CD8-positive, alpha-beta T cell (primary cell): ENCODE measurements at regions of chrX and their contacts with region 1.

Region 1: DNA sequence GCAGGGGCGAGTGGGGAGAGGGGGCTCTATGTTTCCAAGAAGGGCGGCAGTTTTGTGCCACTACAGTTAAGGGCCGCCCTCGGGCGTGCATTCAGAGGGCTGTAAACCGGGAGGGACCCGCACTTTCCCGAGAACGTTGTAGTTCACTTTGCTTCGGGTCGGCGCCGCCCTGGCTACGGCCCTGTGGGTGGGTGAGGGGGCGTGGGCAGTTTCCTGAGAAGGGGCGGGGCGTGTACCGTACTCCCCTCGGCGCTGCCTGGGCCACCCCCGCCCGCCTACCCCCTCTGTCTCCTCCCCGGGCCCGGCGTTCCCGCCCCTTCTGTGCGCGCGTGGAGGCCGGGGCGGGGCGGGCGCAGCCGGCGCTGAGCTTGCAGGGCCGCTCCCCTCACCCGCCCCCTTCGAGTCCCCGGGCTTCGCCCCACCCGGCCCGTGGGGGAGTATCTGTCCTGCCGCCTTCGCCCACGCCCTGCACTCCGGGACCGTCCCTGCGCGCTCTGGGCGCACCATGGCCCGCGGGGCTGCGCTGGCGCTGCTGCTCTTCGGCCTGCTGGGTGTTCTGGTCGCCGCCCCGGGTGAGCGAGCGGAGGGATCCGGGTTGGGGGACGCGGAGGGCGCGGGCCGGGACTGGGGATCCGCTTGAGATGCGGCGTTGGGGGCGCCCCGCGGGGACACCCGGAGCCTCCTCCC is at the start of gene CD99:
- DNase-seq: peak; percentile 83 to 96 (median 89)
- ATAC-seq: peak; percentile 93
- H3K4me3 ChIP-seq: peak within 1 kb of the TSS; percentile 80 to 91
- H3K4me3 Mint-ChIP-seq: peak within 1 kb of the TSS; percentile 94
- H3K27ac ChIP-seq: peak within 1 kb of the TSS; percentile 70 to 71
- H3K27ac Mint-ChIP-seq: peak within 1 kb of the TSS; percentile 94
- H3K4me1 ChIP-seq: peaks cover 44% of the 10 kb centered on the region
- H3K4me1 Mint-ChIP-seq: peaks cover 37% of the 10 kb centered on the region
- H3K27me3 ChIP-seq: no peaks in the 10 kb centered on the region
- H3K27me3 Mint-ChIP-seq: no peaks in the 10 kb centered on the region
- CTCF ChIP-seq: no peak
- total RNA-seq, gene CD99: 114 to 120 TPM

Region 2: GRCh38 chrX:1657367-1658070 is 1033.5 kb before region 1 on chrX:
- CTCF ChIA-PET with region 1: no interaction called
- POLR2A ChIA-PET with region 1: no interaction called
- intact Hi-C with region 1: loop called (anchors 5 kb)
- DNase-seq: peak; percentile 10 to 94 (median 63)
- ATAC-seq: peak; percentile 31
- H3K4me3 ChIP-seq: peak overlapping the region; percentile 46 to 69
- H3K4me3 Mint-ChIP-seq: peak overlapping the region; percentile 98
- H3K27ac ChIP-seq: peak overlapping the region; percentile 78 to 98
- H3K27ac Mint-ChIP-seq: peak overlapping the region; percentile 98
- H3K4me1 ChIP-seq: peaks cover 18% of the 10 kb centered on the region
- H3K4me1 Mint-ChIP-seq: peaks cover 39% of the 10 kb centered on the region
- H3K27me3 ChIP-seq: no peaks in the 10 kb centered on the region
- H3K27me3 Mint-ChIP-seq: no peaks in the 10 kb centered on the region
- CTCF ChIP-seq: no peak

Region 3: GRCh38 chrX:2608638-2609430 is 82.2 kb before region 1 on chrX:
- CTCF ChIA-PET with region 1: no interaction called
- POLR2A ChIA-PET with region 1: no interaction called
- intact Hi-C with region 1: loop called (anchors 5 kb)
- DNase-seq: peak; percentile 66 to 92 (median 85)
- ATAC-seq: peak; percentile 95
- H3K4me3 ChIP-seq: peak overlapping the region; percentile 88 to 93
- H3K4me3 Mint-ChIP-seq: peak overlapping the region; percentile 93
- H3K27ac ChIP-seq: peak overlapping the region; percentile 54 to 59
- H3K27ac Mint-ChIP-seq: peak overlapping the region; percentile 83
- H3K4me1 ChIP-seq: peaks cover 18% of the 10 kb centered on the region
- H3K4me1 Mint-ChIP-seq: peaks cover 46% of the 10 kb centered on the region
- H3K27me3 ChIP-seq: no peaks in the 10 kb centered on the region
- H3K27me3 Mint-ChIP-seq: no peaks in the 10 kb centered on the region
- CTCF ChIP-seq: no peak

Region 4: GRCh38 chrX:2627272-2627867 is 63.6 kb before region 1 on chrX:
- CTCF ChIA-PET with region 1: no interaction called
- POLR2A ChIA-PET with region 1: no interaction called
- intact Hi-C with region 1: loop called (anchors 5 kb)
- DNase-seq: peak in 6 of 9 experiments; percentile 39 to 69 (median 50)
- ATAC-seq: peak; percentile 33
- H3K4me3 ChIP-seq: no peak overlapping the region
- H3K4me3 Mint-ChIP-seq: no peak overlapping the region
- H3K27ac ChIP-seq: no peak overlapping the region
- H3K27ac Mint-ChIP-seq: peak overlapping the region; percentile 58
- H3K4me1 ChIP-seq: peaks cover 16% of the 10 kb centered on the region
- H3K4me1 Mint-ChIP-seq: peaks cover 48% of the 10 kb centered on the region
- H3K27me3 ChIP-seq: no peaks in the 10 kb centered on the region
- H3K27me3 Mint-ChIP-seq: no peaks in the 10 kb centered on the region
- CTCF ChIP-seq: peak; percentile 43

Region 5: DNA sequence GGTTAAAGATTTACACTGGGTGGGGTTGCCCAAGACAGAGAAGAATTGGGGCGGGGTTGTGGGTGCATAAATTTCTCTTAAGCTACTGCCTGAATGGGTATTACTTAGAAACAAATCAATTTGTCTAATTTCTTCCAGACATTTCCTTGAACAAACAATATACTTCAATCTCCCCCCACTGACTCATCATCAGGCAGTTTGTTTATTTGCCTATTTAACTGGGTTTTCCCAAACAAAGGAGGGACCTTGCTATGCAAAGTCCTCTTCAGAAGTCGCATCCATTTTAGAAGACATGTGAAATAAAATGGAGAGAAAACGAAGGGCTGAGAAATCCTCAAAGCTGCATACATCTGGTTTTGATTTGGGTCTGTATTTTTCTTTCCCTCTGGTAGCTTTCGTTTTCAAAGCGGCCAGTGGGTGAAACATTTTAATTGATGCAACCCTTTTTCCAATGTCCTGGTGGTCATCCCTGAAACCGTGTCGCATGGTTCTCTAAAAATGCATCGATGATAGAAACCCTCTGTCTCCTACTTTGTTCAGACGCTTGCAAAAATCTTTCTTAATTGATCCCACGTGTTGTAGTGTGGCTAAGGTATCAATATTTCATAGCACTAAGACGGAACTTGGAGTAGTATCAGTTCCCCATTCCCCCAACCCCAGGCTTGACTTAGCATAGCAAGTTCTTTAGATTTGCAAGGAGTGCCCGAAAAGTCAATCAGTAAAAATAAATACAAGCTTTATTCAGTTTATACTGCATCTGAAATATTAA is 770.6 kb after region 1 on chrX:
- CTCF ChIA-PET with region 1: no interaction called
- POLR2A ChIA-PET with region 1: no interaction called
- intact Hi-C with region 1: no loop called
- DNase-seq: no peak
- ATAC-seq: no peak
- H3K4me3 ChIP-seq: no peak overlapping the region
- H3K4me3 Mint-ChIP-seq: no peak overlapping the region
- H3K27ac ChIP-seq: no peak overlapping the region
- H3K27ac Mint-ChIP-seq: no peak overlapping the region
- H3K4me1 ChIP-seq: no peaks in the 10 kb centered on the region
- H3K4me1 Mint-ChIP-seq: no peaks in the 10 kb centered on the region
- H3K27me3 ChIP-seq: peaks cover 0 to 3% of the 10 kb centered on the region in 2 experiments
- H3K27me3 Mint-ChIP-seq: no peaks in the 10 kb centered on the region
- CTCF ChIP-seq: no peak

Region 6: GRCh38 chrX:3713225-3713936 is 1022.4 kb after region 1 on chrX and contains the start of gene PRKX:
- CTCF ChIA-PET with region 1: no interaction called
- POLR2A ChIA-PET with region 1: no interaction called
- intact Hi-C with region 1: loop called in 1 of 2 experiments (anchors 10 kb)
- DNase-seq: peak; percentile 46 to 88 (median 68)
- ATAC-seq: peak; percentile 87
- H3K4me3 ChIP-seq: peak within 1 kb of the TSS; percentile 60 to 64
- H3K4me3 Mint-ChIP-seq: peak within 1 kb of the TSS; percentile 95
- H3K27ac ChIP-seq: peak within 1 kb of the TSS; percentile 70 to 79
- H3K27ac Mint-ChIP-seq: peak within 1 kb of the TSS; percentile 94
- H3K4me1 ChIP-seq: peaks cover 12% of the 10 kb centered on the region
- H3K4me1 Mint-ChIP-seq: peaks cover 16% of the 10 kb centered on the region
- H3K27me3 ChIP-seq: no peaks in the 10 kb centered on the region
- H3K27me3 Mint-ChIP-seq: no peaks in the 10 kb centered on the region
- CTCF ChIP-seq: no peak
- total RNA-seq, gene PRKX: 56.5 to 56.6 TPM